Calu3 (cell line): ENCODE measurements at regions of chr15 and their contacts with region 1.

Region 1: GRCh38 chr15:101008158-101009139 is 89.3 kb downstream of the LRRK1 start:
- DNase-seq: peak; percentile 97
- H3K4me3 Mint-ChIP-seq: peak overlapping the region; percentile 89
- H3K27ac Mint-ChIP-seq: peak overlapping the region; percentile 92
- H3K4me1 Mint-ChIP-seq: peaks cover 31% of the 10 kb centered on the region
- H3K27me3 Mint-ChIP-seq: no peaks in the 10 kb centered on the region
- CTCF ChIP-seq: peak; percentile 97

Region 2: DNA sequence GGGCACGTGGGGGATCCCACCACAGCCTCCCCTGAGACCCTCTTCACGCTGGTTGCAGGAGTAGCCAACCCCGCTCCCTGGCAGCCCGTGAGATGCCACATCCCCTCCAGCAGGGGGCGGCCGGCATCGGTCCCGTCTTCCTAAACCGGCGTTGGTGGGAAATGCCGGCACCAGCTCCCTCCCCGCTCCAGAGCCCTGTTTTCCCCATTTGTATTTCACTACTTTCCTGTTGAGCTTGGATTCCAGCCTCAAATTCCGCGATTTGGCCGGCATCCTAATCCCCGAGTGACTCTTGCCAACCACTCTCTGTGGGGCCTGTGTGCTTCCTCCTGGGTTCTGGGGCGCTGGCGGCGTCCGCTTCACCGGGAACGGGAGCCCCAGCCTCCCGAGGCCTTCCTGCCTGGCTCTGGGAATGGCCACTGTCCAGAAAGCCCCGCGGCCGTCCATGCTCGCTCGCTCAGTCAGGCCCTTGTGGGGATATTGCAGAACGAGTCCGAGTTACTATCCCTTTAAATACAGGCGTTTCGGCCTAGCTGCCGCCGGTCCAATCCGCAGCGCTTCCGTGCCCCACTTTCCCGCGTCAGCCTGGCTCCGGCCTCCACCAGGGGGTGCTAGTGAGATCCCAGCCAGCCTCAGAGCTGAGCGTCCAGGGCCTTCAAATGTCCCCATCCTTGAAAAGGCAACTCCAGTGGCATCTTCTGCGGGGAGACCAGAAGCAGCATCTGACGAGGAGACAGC is 658.6 kb before region 1 on chr15:
- CTCF ChIA-PET with region 1: interaction called, 5 read pairs
- intact Hi-C with region 1: loop called (anchors 5 kb)
- DNase-seq: peak; percentile 98
- H3K4me3 Mint-ChIP-seq: peak overlapping the region; percentile 94
- H3K27ac Mint-ChIP-seq: peak overlapping the region; percentile 89
- H3K4me1 Mint-ChIP-seq: peaks cover 22% of the 10 kb centered on the region
- H3K27me3 Mint-ChIP-seq: peaks cover 22% of the 10 kb centered on the region
- CTCF ChIP-seq: peak; percentile 70

Region 3: DNA sequence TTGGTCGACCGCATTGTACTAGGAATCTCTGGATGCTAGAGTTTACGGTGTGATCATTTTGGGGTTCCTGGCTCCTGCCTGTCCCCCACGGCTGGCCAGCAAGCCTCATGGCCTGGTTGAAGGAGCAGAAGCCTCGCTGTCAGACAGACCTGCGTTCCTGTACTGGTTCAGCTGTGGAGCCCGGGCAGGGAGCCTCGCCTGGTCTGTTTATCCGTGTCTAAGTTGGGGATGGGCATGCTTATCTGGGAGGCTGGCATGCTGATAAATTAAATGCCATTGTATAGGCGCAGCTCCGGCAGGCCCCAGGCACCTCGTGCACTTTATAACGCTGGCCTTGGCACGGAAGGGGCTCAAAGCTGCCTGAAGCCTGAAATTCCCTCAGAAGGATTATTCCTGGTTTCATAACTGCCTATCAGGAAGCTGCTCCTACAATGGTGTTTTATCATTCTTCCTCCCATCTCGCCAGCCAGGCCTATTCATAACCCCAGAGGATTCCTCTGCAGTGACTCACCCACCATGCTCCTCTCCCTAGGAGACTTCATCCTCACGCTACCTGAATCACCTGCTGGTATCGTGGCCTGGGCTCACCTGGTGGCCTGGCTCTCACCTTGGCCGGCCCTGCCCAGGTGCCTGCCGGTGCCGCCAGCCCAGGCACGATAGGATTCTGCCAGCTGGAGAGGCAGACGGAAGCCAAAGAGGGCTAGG is 295.1 kb before region 1 on chr15:
- CTCF ChIA-PET with region 1: interaction called, 10 read pairs
- intact Hi-C with region 1: no loop called
- DNase-seq: peak; percentile 97
- H3K4me3 Mint-ChIP-seq: peak overlapping the region; percentile 45
- H3K27ac Mint-ChIP-seq: peak overlapping the region; percentile 98
- H3K4me1 Mint-ChIP-seq: peaks cover 85% of the 10 kb centered on the region
- H3K27me3 Mint-ChIP-seq: no peaks in the 10 kb centered on the region
- CTCF ChIP-seq: no peak

Region 4: GRCh38 chr15:100879464-100880138 is 128.8 kb before region 1 on chr15 and contains the start of gene ALDH1A3:
- CTCF ChIA-PET with region 1: interaction called, 6 read pairs
- intact Hi-C with region 1: loop called (anchors 1 kb)
- DNase-seq: peak; percentile 96
- H3K4me3 Mint-ChIP-seq: peak within 1 kb of the TSS; percentile 79
- H3K27ac Mint-ChIP-seq: peak within 1 kb of the TSS; percentile 81
- H3K4me1 Mint-ChIP-seq: peaks cover 31% of the 10 kb centered on the region
- H3K27me3 Mint-ChIP-seq: no peaks in the 10 kb centered on the region
- CTCF ChIP-seq: no peak
- total RNA-seq, gene ALDH1A3: 666 and 983 TPM in 2 replicates

Region 5: DNA sequence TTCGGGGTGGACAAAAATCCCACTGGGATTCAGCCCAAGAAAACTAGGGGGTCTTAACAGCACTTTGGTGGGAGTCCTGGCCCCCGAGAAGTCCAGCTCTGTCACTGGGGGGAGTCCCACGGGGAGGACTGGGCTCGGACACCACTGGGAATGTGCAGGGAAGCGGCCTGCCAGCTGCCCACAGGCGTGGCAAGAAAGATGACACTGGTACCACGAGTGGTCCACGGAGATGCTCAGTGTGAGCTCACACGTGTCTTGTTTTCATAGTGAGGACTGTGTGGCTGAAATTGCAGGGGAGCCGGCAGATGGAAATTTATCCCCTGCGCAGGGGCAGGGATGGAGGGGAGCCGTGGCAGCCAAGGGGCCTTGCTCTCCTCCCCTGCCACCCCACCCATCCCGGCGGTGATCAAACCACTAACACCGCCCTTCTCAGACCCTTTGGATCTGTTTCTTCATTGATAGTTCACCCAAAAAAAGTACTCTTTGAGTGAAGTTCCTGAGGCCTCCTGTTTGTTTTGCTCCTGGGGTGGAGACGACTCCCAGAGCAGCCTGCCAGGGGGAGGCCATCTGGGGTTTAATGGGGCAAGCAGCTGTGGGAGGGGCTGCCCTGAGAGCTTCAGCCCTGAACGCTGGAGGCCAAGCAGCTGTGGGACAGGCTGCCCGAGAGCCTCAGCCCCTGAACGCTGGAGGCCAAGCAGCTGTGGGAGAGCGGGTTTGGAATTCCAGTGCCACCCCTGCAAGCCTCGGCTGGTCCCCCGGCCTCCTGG is 41.6 kb after region 1 on chr15:
- CTCF ChIA-PET with region 1: no interaction called
- intact Hi-C with region 1: no loop called
- DNase-seq: no peak
- H3K4me3 Mint-ChIP-seq: no peak overlapping the region
- H3K27ac Mint-ChIP-seq: no peak overlapping the region
- H3K4me1 Mint-ChIP-seq: no peaks in the 10 kb centered on the region
- H3K27me3 Mint-ChIP-seq: no peaks in the 10 kb centered on the region
- CTCF ChIP-seq: no peak

Region 6: GRCh38 chr15:101070502-101071273 is 62.2 kb after region 1 on chr15:
- CTCF ChIA-PET with region 1: interaction called, 10 read pairs
- intact Hi-C with region 1: no loop called
- DNase-seq: peak; percentile 33
- H3K4me3 Mint-ChIP-seq: peak overlapping the region; percentile 31
- H3K27ac Mint-ChIP-seq: peak overlapping the region; percentile 92
- H3K4me1 Mint-ChIP-seq: peaks cover 13% of the 10 kb centered on the region
- H3K27me3 Mint-ChIP-seq: no peaks in the 10 kb centered on the region
- CTCF ChIP-seq: no peak